ENCODE measurements at regions of chr14 and their contacts with region 1.

Region 1: DNA sequence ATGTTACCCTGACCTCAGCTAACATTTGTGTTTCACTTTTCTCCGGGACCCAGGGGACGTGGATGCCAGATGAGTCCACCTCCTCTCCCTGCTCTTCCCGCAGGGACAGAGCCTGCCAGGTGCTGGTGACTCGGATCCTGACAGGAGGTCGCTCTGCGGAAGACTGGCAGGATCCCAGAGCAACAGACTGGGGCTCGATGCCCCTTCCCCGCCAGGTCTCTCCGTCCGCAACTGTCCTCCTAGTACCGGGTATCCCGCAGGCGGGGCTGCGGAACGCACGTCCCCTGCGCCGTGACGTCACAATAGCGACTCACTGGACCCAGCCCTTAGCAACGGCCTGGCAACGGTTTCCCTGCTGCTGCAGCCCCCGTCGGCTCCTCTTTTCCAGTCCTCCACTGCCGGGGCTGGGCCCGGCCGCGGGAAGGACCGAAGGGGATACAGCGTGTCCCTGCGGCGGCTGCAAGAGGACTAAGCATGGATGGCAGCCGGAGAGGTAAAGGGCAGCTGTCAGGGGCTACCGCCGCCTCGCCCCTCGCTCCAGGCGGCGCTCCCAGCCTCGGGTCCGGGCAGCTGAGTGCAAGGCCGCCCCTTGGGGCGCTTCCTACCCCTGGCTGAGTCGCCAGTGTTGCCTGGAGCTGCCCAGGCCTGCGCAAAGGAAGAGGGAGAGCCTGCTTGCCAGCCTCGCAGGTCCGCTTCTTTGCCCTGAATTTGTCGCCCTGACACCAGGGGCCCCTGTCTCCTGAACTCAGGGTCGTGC is at the start of gene SPATA7:
- DNase-seq: peak; percentile 97
- H3K4me3 ChIP-seq: peak within 1 kb of the TSS; percentile 70 to 91 (median 75)
- H3K27ac ChIP-seq: peak within 1 kb of the TSS; percentile 80 to 84 (median 82)
- H3K4me1 ChIP-seq: peaks cover 0 to 19% (median 12%) of the 10 kb centered on the region in 4 donors
- H3K27me3 ChIP-seq: no peaks in the 10 kb centered on the region
- CTCF ChIP-seq: no peak
- EP300 ChIP-seq: peak in 1 of 4 donors; percentile 54
- POLR2A ChIP-seq: peak; percentile 17 to 63
- total RNA-seq, gene SPATA7: 15.5 to 38.8 (median 35.1) TPM

Region 2: DNA sequence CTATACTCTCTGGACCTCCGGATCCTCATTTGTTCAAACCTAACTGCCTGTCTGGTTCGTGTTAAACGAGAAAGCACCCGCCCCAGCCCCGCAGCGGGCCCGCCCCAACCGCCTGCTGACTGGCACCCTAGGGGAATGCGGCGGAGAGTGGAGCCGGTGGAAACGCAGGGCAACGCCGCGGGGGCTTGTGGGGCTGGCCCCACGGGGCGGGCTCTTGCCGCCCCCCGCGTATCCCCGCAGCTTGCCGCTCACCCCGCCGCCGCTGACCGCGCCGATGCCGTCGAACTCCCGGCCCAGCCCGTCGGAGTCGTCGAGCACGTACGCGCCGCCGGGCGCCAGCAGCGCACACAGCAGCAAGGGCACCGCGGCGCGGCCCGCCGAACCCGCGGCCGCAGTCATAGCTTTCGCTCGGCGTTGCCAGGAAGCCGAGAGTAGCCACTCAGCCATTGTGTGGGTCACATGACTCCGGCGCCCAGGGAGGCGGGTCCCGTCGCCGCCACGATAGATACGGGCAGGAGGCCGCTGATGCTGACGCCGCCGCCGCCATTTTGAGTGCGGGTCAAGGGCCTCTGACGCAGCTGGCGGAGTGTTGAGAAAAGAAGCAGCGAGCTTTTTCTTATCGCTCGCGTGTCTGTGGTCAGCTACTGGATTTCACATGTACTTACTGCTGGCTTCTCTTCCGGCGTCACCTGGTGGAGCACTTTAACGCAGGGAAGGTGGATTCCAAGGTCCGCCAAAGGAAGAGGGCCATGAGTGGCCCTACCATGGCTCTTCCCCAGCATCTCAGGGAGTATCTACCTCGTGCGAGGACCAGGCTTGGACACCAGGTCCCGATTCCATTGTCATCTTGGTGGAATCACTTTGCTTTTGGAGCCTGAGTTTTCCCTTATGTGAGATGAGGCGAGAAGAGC is 392.6 kb before region 1 on chr14 and contains the start of gene GALC:
- intact Hi-C with region 1: loop called (anchors 5 kb)
- DNase-seq: peak; percentile 97
- H3K4me3 ChIP-seq: peak within 1 kb of the TSS; percentile 69 to 86 (median 84)
- H3K27ac ChIP-seq: peak within 1 kb of the TSS; percentile 91 to 98 (median 94)
- H3K4me1 ChIP-seq: peaks cover 0 to 18% (median 8%) of the 10 kb centered on the region in 4 donors
- H3K27me3 ChIP-seq: no peaks in the 10 kb centered on the region
- CTCF ChIP-seq: no peak
- EP300 ChIP-seq: no peak
- POLR2A ChIP-seq: no peak
- total RNA-seq, gene GALC: 11.3 to 22.8 (median 15.2) TPM

Region 3: DNA sequence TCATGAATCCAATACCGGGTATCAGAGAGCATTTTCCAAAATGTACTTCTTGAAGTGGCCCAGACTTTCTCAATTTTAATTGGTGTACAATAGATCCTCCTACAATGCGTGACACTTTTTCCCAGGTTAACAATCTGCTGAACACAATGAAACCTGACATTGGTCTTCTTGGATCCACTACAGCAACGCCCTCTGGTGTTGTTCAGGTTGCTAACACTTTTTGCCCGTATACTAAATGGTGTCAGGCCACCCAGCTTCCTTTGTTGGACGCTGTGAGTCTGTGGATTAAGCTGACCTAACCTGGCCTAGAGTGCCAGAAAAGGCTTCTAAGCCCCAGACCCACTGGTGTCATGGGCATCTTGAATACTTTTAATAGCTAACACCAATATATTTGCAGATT is 151.6 kb before region 1 on chr14:
- intact Hi-C with region 1: no loop called
- DNase-seq: no peak
- H3K4me3 ChIP-seq: no peak overlapping the region
- H3K27ac ChIP-seq: no peak overlapping the region
- H3K4me1 ChIP-seq: no peaks in the 10 kb centered on the region
- H3K27me3 ChIP-seq: no peaks in the 10 kb centered on the region
- CTCF ChIP-seq: no peak
- EP300 ChIP-seq: no peak
- POLR2A ChIP-seq: no peak

Region 4: GRCh38 chr14:88493392-88494185 is 108.1 kb after region 1 on chr14:
- intact Hi-C with region 1: no loop called
- DNase-seq: no peak
- H3K4me3 ChIP-seq: no peak overlapping the region
- H3K27ac ChIP-seq: no peak overlapping the region
- H3K4me1 ChIP-seq: peaks cover 0 to 7% (median 0%) of the 10 kb centered on the region in 4 donors
- H3K27me3 ChIP-seq: no peaks in the 10 kb centered on the region
- CTCF ChIP-seq: no peak
- EP300 ChIP-seq: no peak
- POLR2A ChIP-seq: no peak